HEK293T (cell line): ENCODE measurements at regions of chr13 and their contacts with region 1.

Region 1: GRCh38 chr13:92821324-92821723 is 405.3 kb upstream of the GPC6 start:
- DNase-seq: no peak

Region 2: GRCh38 chr13:92896842-92897241 is 75.5 kb after region 1 on chr13:
- CTCF ChIA-PET with region 1: no interaction called
- POLR2A ChIA-PET with region 1: no interaction called
- DNase-seq: peak; percentile 51

Region 3: GRCh38 chr13:92938486-92939019 is 117.2 kb after region 1 on chr13:
- CTCF ChIA-PET with region 1: interaction called, 11 read pairs
- POLR2A ChIA-PET with region 1: no interaction called
- DNase-seq: no peak